Activated CD4-positive, alpha-beta memory T cell treated with anti-CD3 and anti-CD28 coated beads, Interleukin-2, amount 10 ng/mL, durations not matched to agents 7 days and 5 days (primary cell): ENCODE measurements at regions of chr22 and their contacts with region 1.

Region 1: GRCh38 chr22:24156913-24157821 is 24.1 kb upstream of the SUSD2 start:
- DNase-seq: peak; percentile 94
- H3K4me3 Mint-ChIP-seq: peak overlapping the region; percentile 85
- H3K27ac Mint-ChIP-seq: peak overlapping the region; percentile 86
- H3K4me1 Mint-ChIP-seq: peaks cover 61% of the 10 kb centered on the region
- H3K27me3 Mint-ChIP-seq: no peaks in the 10 kb centered on the region

Region 2: DNA sequence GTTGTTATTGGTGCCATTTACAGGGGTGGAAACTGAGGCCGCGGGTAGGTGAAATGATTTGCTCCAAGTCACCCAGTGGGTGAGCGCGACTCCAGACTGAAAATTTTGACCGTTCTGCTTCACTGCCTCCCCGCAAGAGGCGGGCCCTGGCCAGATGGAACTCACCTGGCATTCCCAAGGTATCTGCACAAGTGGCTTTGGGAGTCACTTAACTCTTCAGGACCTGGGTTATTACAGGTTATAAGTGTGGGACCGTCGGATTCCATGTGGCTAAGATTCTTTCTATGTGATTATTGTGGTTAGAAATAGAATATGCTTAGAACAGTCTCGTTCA is 145.5 kb before region 1 on chr22:
- CTCF ChIA-PET with region 1: interaction called, 22 read pairs
- POLR2A ChIA-PET with region 1: interaction called, 19 read pairs
- DNase-seq: no peak
- H3K4me3 Mint-ChIP-seq: peak overlapping the region; percentile 89
- H3K27ac Mint-ChIP-seq: peak overlapping the region; percentile 86
- H3K4me1 Mint-ChIP-seq: peaks cover 31% of the 10 kb centered on the region
- H3K27me3 Mint-ChIP-seq: no peaks in the 10 kb centered on the region

Region 3: DNA sequence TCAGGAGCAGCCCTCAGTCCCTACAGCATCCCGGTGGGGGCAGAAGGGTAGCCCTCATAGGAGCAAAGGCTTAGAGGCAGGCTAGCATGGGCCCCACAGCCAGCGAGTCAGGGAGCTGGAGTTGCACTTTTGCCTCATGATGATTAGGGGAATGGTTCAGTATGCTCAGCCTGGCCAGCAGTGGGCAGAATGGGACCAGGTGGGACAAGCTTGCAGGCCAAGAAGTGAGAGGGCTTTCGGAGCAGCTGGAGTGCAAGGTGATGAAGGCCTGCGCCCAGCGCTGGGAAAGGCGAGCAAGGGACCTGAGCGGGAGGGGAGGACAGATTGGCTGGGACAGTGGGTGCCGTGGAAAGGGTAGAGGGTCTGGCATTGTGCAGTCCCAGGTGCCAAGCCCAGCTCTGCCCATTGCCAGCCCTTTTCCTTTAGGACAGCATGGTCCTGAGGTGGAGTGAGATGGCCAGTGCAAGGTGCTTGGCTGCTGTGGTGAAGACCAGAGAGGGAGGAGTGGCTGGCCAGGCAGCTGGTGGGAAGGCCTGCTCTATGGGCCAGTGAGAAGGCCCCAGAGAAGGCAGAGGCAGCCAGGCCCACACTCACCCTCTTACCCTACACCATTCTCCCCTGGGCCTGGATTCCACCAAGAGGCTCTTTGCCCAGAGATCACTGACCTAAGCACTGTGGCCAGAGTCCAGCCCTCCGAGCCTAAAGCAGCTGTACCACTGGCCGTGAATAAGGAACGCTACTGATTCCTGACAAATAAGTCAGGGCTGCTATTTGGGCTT is 23.8 kb before region 1 on chr22:
- CTCF ChIA-PET with region 1: interaction called, 31 read pairs
- POLR2A ChIA-PET with region 1: interaction called, 4 read pairs
- DNase-seq: no peak
- H3K4me3 Mint-ChIP-seq: no peak overlapping the region
- H3K27ac Mint-ChIP-seq: no peak overlapping the region
- H3K4me1 Mint-ChIP-seq: peaks cover 3% of the 10 kb centered on the region
- H3K27me3 Mint-ChIP-seq: no peaks in the 10 kb centered on the region

Region 4: GRCh38 chr22:24146194-24146616 is 11.0 kb before region 1 on chr22:
- CTCF ChIA-PET with region 1: interaction called, 7 read pairs
- POLR2A ChIA-PET with region 1: interaction called, 16 read pairs
- DNase-seq: peak; percentile 28
- H3K4me3 Mint-ChIP-seq: no peak overlapping the region
- H3K27ac Mint-ChIP-seq: peak overlapping the region; percentile 24
- H3K4me1 Mint-ChIP-seq: peaks cover 38% of the 10 kb centered on the region
- H3K27me3 Mint-ChIP-seq: no peaks in the 10 kb centered on the region

Region 5: GRCh38 chr22:24198682-24199052 is 41.5 kb after region 1 on chr22:
- CTCF ChIA-PET with region 1: interaction called, 15 read pairs
- POLR2A ChIA-PET with region 1: no interaction called
- DNase-seq: no peak
- H3K4me3 Mint-ChIP-seq: no peak overlapping the region
- H3K27ac Mint-ChIP-seq: peak overlapping the region; percentile 87
- H3K4me1 Mint-ChIP-seq: peaks cover 40% of the 10 kb centered on the region
- H3K27me3 Mint-ChIP-seq: peaks cover 8% of the 10 kb centered on the region